ENCODE measurements at regions of chr7 and their contacts with region 1.

Region 1: DNA sequence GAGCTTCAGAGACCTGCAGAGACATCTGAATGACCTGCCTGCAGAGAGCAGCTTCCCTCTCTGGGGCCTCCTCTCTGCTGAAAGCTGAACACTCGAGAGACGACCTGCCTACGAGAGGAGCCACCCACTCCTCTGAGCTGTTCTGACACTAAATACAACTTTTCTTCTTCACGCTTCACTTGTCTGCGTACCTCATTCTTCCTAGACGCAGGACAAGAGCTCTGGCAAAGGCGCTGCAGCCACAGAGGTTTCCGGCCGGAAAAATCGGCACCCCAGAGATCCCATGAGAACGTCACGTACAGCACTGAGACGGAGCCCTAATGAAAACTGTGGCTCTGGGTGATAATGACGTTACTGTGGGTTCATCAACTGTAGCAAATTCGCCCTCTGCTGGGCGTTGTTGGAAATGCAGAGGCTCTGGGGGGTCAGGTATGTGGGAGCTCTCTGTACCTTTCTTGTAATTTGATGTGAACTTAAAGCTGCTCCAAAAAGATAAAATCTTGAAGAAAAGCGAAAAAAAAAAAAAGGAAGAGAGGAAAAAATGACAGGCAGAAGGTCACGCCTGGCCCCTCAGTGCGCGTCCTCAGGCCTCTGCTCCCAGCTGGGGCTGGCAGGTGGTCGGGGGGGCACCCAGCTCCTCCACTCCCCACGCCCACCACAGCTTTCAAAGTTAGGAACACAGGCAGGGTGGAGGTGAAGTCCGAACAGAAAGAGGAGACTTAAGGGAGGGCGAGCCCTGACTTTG is 120.7 kb downstream of the DYNC2I1 start:
- DNase-seq: peak; percentile 43 to 91
- H3K4me3 ChIP-seq: peak overlapping the region; percentile 48 to 50
- H3K27ac ChIP-seq: peak overlapping the region in 1 of 2 donors; percentile 17
- H3K4me1 ChIP-seq: peaks cover 2 to 8% of the 10 kb centered on the region in 2 donors
- H3K27me3 ChIP-seq: no peaks in the 10 kb centered on the region
- CTCF ChIP-seq: peak; percentile 75 to 96 (median 84)

Region 2: DNA sequence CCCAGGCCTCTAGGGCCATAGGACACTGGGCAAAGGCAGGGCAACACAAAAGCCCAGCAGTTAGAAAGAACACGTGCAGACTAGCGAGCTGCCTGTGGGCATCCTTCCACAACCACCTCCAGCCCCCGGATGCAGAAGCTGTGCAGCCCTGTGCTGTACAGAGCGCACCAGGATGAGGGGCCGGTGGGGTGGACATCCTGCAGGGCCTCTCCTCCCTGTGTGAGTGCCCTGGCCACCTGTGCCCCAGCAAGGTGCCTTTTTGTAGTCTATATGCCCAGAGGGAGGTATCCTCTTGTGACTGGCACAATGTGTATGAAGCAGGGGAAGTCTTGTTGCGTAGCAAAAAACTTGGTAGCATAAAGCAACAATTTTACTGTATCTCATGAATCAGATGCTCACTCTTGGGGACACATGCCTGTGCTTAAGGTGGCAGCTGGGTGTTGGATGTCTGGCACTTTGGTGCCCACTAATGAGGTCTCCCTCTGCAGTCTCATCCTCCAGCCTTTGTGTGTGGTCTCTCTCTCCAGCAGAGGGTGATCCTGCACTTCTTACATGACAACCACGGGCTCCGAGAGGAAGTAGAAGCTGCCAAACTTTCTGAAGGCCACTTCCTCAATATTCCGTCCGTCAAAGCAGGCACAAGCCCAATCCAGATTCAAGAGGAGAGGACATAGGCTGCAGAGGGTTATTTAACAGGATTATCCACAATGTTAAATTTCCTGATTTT is 281.1 kb before region 1 on chr7:
- intact Hi-C with region 1: loop called (anchors 5 kb)
- DNase-seq: peak in 1 of 2 donors; percentile 82
- H3K4me3 ChIP-seq: no peak overlapping the region
- H3K27ac ChIP-seq: no peak overlapping the region
- H3K4me1 ChIP-seq: no peaks in the 10 kb centered on the region
- H3K27me3 ChIP-seq: no peaks in the 10 kb centered on the region
- CTCF ChIP-seq: peak; percentile 27 to 45 (median 42)

Region 3: DNA sequence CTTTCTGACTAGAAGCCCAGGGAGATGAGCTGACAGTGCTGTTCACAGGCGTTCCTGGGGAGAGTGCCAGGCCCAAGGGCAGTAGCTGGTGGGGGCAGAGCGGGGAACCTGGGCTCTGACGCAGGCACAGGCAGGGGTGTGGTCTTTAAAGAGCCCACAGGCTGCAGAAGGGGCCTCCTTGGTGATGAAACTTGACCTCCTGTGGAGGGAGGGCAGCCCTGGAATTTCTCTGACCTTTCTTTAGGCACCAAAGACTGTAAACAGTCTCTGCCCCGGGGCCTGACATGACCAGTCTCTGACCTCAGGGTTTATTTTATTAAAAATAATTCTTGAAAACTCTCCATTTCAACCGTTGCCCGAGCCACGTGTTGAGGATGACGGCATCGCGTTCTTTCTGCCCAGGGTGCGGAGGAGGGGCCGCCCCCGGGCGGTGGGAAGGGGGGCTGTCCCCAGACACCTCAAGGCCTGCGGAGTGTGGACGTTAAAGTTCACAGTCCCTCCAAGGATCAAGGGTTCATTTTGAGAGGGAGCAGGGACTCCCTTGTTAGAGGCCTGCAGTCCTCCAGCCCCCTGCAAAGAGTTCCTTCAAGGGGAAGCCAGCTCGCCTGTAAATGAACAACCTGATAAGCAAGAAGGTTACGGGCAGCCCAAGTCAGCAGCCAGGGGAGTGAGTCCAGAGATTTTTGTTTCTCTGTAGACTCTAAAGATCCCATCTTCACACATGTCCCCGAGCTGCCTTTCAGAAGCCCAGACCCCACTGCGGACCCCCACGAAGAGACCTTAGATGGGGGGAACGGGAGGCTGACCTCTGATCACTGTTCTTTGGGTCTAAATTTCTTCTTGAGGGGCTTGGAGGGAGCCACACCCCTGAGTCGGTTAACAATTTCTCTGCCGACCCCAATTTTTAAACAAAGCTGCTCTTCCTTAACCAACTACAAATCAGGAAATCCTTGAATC is 38.7 kb after region 1 on chr7:
- intact Hi-C with region 1: no loop called
- DNase-seq: peak; percentile 25 to 93
- H3K4me3 ChIP-seq: no peak overlapping the region
- H3K27ac ChIP-seq: peak overlapping the region; percentile 91 to 96
- H3K4me1 ChIP-seq: peaks cover 11 to 59% of the 10 kb centered on the region in 2 donors
- H3K27me3 ChIP-seq: no peaks in the 10 kb centered on the region
- CTCF ChIP-seq: peak in 1 of 3 experiments; percentile 6

Region 4: DNA sequence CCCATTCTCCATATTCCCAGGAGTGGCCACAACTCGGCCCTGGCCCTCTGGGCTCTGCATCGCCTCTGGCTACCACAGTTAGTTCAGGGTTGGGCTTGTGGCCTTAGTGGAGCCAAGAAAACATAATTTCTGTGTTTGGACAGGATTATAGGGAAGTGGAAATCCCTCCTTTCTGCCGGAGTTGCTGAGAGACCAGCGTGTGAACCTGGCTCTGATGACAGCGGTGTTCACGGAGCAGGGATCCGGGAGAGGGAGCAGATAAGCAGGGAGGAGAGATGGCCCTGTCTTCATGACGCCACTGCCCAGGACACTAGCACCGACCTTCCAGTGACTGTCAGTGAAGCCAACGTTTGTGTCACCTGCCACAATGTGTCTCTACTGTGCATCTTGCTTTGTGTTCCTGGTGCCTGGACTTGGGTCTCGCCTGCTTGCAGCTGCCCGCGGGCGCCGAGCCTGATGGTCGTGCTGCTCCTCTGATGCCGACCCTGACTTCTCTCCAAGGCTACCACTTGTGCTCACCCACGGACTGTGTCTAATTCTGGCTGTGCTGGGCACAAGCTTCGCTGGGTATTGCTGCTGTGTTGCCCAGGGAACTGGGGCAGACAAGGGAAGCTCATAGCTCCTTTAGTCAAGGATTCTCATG is 234.6 kb after region 1 on chr7:
- intact Hi-C with region 1: no loop called
- DNase-seq: no peak
- H3K4me3 ChIP-seq: peak overlapping the region; percentile 20 to 37
- H3K27ac ChIP-seq: peak overlapping the region; percentile 69
- H3K4me1 ChIP-seq: peaks cover 4 to 5% of the 10 kb centered on the region in 2 donors
- H3K27me3 ChIP-seq: no peaks in the 10 kb centered on the region
- CTCF ChIP-seq: no peak